MCF 10A (cell line): ENCODE measurements at regions of chr1 and their contacts with region 1.

Region 1: DNA sequence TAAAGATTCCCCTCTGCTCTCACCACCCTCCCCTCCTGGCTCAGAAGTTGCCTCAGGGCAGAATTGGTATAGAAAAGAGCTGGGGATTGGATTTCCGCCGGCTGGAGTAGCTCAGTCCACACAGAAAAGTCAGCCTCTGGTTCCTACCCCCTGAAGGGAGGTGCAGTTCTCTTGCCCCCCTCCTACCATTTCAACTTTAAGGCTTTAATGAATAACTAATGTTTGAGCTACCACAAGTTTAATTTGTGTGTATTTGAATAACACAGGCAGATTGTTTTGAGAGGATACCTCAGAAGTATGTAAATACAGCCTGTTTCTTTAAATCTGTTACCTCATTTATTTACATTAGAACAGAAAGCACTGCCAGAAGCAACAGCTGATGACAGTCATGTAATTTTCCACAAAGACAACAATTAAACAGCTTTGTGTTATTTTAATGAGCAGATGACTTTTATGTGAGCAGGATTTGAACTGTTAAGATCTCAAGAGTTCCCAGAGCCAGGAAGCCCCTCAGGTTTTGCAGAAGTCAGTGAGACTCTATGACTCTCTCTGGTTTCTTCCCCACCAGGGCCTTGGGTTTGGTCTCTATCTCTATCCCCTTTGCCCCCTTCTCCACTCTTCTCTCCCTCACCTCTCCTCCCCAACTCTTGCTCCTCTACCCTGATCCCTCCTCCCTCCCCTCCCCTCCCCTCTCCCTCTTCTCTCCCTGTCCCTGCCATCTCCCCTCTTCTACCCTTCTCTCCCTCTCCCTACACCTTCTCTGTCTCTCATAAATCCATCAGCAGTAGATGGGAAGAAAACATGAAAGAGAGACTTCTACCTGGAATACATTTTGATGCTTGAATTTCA is 26.3 kb downstream of the DUSP10 start:
- DNase-seq: peak; percentile 60
- H3K4me3 Mint-ChIP-seq: no peak overlapping the region
- H3K27ac Mint-ChIP-seq: peak overlapping the region; percentile 75
- H3K4me1 Mint-ChIP-seq: peaks cover 60% of the 10 kb centered on the region
- H3K27me3 Mint-ChIP-seq: no peaks in the 10 kb centered on the region
- CTCF ChIP-seq: no peak

Region 2: GRCh38 chr1:221725735-221726672 is 10.5 kb after region 1 on chr1:
- CTCF ChIA-PET with region 1: interaction called, 5 read pairs
- POLR2A ChIA-PET with region 1: interaction called, 20 read pairs
- intact Hi-C with region 1: no loop called
- DNase-seq: peak; percentile 67
- H3K4me3 Mint-ChIP-seq: peak overlapping the region; percentile 47
- H3K27ac Mint-ChIP-seq: peak overlapping the region; percentile 97
- H3K4me1 Mint-ChIP-seq: peaks cover 53% of the 10 kb centered on the region
- H3K27me3 Mint-ChIP-seq: no peaks in the 10 kb centered on the region
- CTCF ChIP-seq: no peak